Mammary epithelial cell (primary cell): ENCODE measurements at regions of chr3 and their contacts with region 1.

Region 1: GRCh38 chr3:194089357-194090177 is 46.4 kb upstream of the HES1 start:
- DNase-seq: peak; percentile 100
- H3K4me3 ChIP-seq: no peak overlapping the region
- H3K27ac ChIP-seq: peak overlapping the region; percentile 77
- H3K4me1 ChIP-seq: peaks cover 34% of the 10 kb centered on the region
- H3K27me3 ChIP-seq: no peaks in the 10 kb centered on the region
- CTCF ChIP-seq: no peak

Region 2: DNA sequence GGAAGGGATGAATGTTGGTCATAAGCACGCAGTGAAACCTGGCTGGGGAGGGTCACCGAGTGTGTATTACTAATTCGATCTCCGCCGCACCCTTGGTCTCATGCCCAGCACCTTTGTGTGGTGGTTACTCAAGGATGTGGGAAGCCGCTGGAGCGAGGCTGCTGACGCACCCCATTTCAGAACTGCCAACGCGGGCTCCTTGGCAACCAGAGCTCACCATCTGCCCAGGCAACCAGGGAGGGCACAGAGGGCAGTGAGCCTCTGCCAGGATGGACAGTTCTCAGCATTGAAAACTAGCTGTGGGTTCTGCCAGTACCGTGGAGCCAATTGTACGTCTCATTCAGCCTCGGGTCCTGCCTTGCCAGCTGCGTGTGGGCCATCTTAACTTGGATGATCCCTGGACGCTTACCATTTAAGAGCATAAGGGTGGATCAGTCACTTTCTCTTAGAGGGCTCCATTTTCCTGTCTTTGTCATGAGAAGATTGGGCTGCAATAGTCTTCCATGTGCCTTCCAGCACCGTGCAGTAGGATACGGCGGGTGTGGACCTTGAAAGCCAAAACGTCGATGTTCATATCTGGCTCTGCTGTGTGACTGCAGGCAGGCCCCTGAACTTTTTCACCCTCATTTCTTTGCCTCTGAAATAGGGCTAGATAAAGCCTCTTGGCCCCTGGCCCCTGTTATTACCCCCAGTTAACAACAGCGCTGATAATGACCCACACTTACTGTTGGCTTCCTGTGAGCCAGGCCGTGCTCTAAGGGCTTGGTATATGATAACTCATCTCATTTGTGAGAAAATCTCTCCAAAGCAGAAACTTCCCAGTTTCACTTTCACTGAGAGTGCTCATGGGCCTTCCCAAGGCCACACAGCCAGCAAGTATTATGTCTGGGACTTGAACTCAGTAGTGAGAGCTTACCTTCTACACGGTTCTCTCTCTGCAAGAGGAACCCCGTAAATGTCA is 257.8 kb before region 1 on chr3:
- CTCF ChIA-PET with region 1: no interaction called
- dilution Hi-C with region 1: no loop called
- in situ Hi-C with region 1: no loop called
- intact Hi-C with region 1: loop called (anchors 1 kb)
- DNase-seq: peak; percentile 100
- H3K4me3 ChIP-seq: no peak overlapping the region
- H3K27ac ChIP-seq: peak overlapping the region; percentile 100
- H3K4me1 ChIP-seq: peaks cover 51% of the 10 kb centered on the region
- H3K27me3 ChIP-seq: no peaks in the 10 kb centered on the region
- CTCF ChIP-seq: no peak

Region 3: DNA sequence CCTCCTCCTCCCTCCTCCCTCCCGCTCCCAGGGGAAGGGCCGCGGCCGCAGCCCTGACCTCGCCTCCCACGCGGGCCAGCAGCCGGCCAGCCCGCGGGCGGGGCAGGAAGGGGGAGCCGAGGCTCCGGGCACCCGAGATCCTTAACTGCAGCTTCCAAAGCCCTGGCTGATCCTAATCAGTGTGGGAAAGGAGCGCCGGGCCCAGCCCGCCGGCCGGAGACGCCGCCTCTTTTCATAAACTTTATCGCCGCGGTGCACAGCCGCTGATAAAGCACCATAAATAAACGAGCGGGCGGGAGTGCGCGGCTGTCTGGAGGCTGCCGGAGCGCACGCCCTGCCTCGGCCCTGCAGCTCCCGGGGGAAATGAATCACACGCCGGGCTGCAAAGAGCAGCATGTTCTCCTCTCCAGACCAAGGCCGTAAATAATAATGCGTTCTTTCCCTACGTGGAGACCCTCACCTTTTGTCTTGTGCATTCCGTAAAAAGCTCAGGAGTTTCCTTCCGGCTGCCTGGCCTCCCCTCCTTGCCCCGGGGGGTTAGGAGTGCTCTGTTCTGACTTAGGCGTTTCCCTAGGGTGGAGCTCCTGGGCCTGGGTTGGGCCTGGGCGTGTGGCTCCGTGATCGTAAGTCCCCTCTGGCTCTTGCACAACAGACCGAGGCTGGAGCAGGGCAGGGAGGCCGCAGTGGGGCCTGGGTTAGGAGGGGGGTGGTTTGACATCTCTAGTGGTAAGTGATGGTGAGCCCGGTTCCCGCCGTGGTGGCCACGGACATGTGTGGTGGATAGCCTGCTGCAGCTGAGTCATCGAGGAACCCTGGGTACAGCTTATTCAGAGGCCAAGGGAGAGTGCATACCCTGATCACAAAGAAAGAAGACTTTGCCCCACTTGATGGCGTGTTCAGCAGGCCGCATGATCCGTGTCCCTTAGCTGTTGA is 86.2 kb before region 1 on chr3:
- CTCF ChIA-PET with region 1: no interaction called
- dilution Hi-C with region 1: no loop called
- in situ Hi-C with region 1: no loop called
- intact Hi-C with region 1: loop called (anchors 2 kb)
- DNase-seq: peak; percentile 94
- H3K4me3 ChIP-seq: peak overlapping the region; percentile 29 to 41 (median 32)
- H3K27ac ChIP-seq: peak overlapping the region; percentile 75
- H3K4me1 ChIP-seq: peaks cover 25% of the 10 kb centered on the region
- H3K27me3 ChIP-seq: no peaks in the 10 kb centered on the region
- CTCF ChIP-seq: no peak

Region 4: DNA sequence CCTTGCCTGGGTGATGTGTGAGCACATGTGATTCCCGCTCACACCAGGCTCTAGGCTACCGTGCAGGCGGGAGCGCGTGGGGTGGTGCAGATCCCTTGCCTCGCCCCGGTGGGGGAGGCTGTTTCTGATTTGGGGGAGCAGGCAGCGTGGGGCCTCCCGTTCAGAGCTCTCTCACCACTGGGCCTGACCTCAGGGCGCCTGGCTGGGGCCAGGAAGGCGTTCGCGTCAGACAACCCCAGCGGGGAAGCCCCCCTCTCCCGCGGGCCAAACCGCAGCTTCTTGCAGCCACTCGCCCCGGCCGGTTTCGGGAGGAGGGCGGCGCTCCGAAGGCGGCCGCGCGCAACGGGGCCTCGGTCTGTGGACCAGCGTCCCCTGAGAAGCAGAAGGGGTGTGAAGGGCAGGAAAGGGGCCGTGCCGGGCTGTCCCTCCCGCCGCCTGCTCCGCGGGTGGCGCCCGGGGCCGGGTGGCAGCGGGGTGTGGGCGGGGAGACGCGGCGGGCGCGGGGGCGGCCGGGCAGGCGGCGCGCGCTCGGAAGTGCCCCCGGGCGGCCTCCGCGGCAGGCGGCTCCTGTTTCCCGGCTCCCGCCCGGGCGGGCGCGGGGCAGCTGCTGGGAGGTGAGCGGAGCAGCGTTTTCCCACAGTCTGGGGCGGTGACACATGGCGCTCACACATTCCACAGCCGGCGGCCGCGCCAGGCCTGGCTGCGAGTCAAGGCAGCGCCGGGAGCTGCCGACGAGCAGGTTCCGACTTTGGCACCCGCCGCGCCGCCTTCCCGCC is 18.7 kb before region 1 on chr3:
- CTCF ChIA-PET with region 1: no interaction called
- dilution Hi-C with region 1: no loop called
- in situ Hi-C with region 1: no loop called
- intact Hi-C with region 1: loop called (anchors 1 kb)
- DNase-seq: peak; percentile 95
- H3K4me3 ChIP-seq: peak overlapping the region; percentile 18 to 40 (median 24)
- H3K27ac ChIP-seq: peak overlapping the region; percentile 61
- H3K4me1 ChIP-seq: peaks cover 20% of the 10 kb centered on the region
- H3K27me3 ChIP-seq: no peaks in the 10 kb centered on the region
- CTCF ChIP-seq: no peak

Region 5: DNA sequence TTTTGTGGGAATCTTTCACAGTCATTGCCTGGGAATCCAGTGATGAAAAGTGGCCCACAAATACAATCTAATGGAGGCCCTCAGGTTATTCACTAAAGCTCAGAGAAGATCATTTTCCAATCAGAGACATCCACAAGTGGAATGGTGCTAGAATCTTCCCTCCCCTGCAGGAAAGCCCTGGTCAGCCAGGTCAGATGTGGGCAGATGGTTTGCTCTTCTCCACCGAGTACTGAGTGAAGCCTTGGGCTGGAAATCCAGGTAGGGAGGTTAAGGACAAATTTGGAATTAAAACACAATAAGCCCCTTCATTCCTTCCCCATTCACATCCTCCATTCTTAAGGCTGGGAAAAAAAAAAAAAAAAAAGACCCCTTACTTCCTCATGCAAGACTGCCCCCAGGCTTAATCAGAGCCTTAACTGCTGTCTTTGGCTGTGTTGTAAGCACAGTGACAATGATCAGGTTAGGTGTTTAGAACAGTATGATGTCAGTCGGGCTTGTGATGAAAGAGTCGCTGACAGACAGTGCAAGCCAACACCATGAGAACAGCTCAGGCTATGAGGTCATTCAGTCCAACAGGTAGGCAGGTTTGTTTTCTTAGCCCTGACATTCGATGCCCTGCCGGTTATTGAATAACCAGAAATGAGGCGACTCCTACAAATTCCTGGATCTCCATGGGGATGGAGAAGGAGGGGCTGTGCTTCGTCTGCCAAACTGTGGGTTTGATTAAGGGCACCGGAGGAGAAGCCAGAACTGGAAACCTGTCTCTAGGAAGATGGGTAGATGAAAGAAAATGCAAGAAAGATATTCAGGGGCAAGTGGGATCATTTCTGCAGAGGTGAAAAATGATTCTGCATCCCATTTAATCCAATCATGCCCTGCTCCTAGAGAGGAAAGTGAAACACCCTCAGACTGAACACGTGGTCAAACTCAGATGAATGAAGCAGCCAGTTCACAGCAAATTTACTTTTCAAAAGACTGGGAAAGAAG is 22.8 kb after region 1 on chr3:
- CTCF ChIA-PET with region 1: no interaction called
- dilution Hi-C with region 1: loop called (anchors 5 kb)
- in situ Hi-C with region 1: no loop called
- intact Hi-C with region 1: loop called (anchors 2 kb)
- DNase-seq: peak; percentile 87
- H3K4me3 ChIP-seq: no peak overlapping the region
- H3K27ac ChIP-seq: no peak overlapping the region
- H3K4me1 ChIP-seq: peaks cover 8% of the 10 kb centered on the region
- H3K27me3 ChIP-seq: no peaks in the 10 kb centered on the region
- CTCF ChIP-seq: no peak

Region 6: DNA sequence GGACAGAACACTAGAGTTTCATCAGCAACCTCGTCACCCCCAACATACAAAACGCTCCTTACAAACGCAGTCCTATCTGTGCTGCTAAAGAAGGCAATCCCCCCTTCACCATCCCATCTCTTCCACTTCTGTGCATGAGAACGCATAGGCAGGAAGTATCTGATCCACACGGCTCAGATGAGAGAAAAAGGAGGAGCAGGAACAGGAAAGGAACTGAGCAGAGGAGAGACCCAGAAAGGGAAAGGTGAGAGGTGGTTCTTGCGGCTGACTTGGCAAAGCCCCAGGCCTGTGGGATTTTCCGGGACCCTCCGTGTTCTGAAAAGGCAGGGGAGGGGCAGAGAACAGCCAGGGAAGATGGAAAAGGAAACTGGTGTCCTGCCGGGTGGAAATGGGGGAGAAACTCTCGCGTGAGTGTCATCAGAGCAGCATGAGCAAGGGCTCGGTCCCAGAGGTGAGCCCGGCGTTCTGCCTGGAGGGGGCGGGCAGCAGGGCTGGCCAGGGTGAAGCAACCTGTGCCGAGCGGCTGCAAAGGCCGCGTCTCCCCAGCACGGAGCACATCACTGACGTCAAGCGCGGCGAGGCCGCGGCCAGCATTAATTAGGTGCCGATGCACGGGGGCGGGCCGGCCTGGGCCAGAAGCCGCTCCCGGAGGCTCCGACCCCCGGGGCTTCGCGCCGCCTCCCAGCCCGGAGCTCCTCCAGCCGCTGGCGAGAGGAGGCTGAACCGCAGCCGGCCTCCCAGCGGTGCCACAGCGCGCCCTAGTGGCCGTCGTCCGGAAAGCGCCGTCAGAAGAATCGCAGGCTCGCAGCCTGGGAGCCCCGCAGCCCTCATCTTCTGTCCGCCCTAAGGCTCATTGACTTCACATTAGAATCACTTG is 225.8 kb after region 1 on chr3:
- CTCF ChIA-PET with region 1: interaction called, 5 read pairs
- dilution Hi-C with region 1: no loop called
- in situ Hi-C with region 1: no loop called
- intact Hi-C with region 1: loop called (anchors 2 kb)
- DNase-seq: peak; percentile 89
- H3K4me3 ChIP-seq: peak overlapping the region; percentile 26 to 51 (median 30)
- H3K27ac ChIP-seq: peak overlapping the region; percentile 63
- H3K4me1 ChIP-seq: peaks cover 16% of the 10 kb centered on the region
- H3K27me3 ChIP-seq: no peaks in the 10 kb centered on the region
- CTCF ChIP-seq: peak; percentile 73 to 92

Region 7: DNA sequence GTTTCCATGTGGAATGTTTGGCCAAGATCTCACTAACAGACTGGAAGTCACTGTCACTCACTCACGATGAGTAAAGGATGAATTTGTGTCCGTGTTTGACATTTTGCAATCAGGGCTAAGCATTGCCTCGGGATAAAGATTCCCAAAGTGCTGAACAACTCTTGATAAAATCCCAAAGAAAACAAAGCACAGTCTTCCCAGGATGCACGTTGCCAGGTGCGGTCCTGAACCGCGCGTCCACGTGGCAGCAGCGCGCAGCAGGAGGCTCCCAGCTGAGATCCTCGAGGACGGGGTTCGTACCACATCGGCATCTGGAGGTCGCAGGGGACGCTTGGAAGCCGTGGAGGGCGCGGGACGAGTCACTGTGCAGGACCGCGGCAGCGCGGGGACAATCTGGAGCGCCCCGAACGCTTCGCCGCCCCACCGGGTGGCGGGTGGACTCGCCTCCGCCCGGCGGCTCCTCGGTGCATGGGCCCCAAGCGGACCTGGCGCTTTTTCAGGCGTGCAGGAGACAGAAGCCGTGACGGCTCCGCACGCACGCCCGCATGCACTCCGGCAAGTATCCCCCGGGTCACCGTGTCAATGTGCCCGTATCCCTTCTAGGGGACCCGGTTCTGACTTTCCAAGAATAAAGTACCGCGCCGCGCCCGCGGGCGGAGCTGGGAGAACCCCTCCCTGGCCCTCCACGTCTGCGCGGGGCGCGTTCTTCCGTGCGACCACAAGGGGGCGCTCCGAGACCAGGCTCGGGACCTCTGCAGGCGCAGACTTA is 243.8 kb after region 1 on chr3:
- CTCF ChIA-PET with region 1: no interaction called
- dilution Hi-C with region 1: no loop called
- in situ Hi-C with region 1: no loop called
- intact Hi-C with region 1: no loop called
- DNase-seq: peak; percentile 76
- H3K4me3 ChIP-seq: peak overlapping the region; percentile 5 to 37 (median 36)
- H3K27ac ChIP-seq: peak overlapping the region; percentile 36
- H3K4me1 ChIP-seq: peaks cover 35% of the 10 kb centered on the region
- H3K27me3 ChIP-seq: no peaks in the 10 kb centered on the region
- CTCF ChIP-seq: peak; percentile 73 to 98